HepG2 (cell line): ENCODE measurements at regions of chr7 and their contacts with region 1.

Region 1: GRCh38 chr7:55177589-55178261 is 158.9 kb downstream of the EGFR start:
- DNase-seq: peak; percentile 94
- ATAC-seq: peak; percentile 74
- H3K4me3 ChIP-seq: peak overlapping the region; percentile 42 to 79 (median 49); a peak in 5 of 6 replicates
- H3K27ac ChIP-seq: peak overlapping the region; percentile 99
- H3K4me1 ChIP-seq: peaks cover 69% of the 10 kb centered on the region
- H3K27me3 ChIP-seq: no peaks in the 10 kb centered on the region; a peak in 1 of 5 replicates
- CTCF ChIP-seq: peak; percentile 30
- EP300 ChIP-seq: peak in 1 of 2 experiments; percentile 71; a peak in 2 of 4 replicates
- POLR2A ChIP-seq: peak in 1 of 2 experiments; percentile 64; a peak in 2 of 4 replicates
- RAD21 ChIP-seq: no peak

Region 2: DNA sequence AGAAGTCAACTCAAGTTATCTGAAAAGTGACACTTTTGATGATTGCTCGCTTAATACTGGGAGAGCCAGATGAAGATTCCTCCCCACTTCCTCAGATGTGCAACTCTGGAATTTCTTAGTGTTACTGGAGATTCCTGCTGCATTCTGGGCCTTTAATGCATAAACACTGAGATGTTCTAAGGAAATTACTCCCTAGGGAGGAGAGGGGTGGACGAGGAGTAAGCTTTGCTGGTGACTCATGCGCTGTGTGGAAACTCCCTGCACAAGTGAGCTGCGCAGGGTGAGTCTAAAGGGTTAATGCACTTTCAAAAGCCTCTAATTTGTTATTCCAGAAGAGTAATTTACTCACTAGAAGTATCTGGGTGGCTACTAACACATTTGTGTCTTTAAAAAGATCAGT is 112.6 kb before region 1 on chr7:
- CTCF ChIA-PET with region 1: no interaction called
- POLR2A ChIA-PET with region 1: interaction called, 34 read pairs
- in situ Hi-C with region 1: no loop called
- intact Hi-C with region 1: no loop called
- DNase-seq: no peak
- ATAC-seq: no peak
- H3K4me3 ChIP-seq: no peak overlapping the region
- H3K27ac ChIP-seq: peak overlapping the region; percentile 69
- H3K4me1 ChIP-seq: peaks cover 60% of the 10 kb centered on the region
- H3K27me3 ChIP-seq: no peaks in the 10 kb centered on the region
- CTCF ChIP-seq: no peak
- EP300 ChIP-seq: no peak
- POLR2A ChIP-seq: no peak
- RAD21 ChIP-seq: no peak

Region 3: DNA sequence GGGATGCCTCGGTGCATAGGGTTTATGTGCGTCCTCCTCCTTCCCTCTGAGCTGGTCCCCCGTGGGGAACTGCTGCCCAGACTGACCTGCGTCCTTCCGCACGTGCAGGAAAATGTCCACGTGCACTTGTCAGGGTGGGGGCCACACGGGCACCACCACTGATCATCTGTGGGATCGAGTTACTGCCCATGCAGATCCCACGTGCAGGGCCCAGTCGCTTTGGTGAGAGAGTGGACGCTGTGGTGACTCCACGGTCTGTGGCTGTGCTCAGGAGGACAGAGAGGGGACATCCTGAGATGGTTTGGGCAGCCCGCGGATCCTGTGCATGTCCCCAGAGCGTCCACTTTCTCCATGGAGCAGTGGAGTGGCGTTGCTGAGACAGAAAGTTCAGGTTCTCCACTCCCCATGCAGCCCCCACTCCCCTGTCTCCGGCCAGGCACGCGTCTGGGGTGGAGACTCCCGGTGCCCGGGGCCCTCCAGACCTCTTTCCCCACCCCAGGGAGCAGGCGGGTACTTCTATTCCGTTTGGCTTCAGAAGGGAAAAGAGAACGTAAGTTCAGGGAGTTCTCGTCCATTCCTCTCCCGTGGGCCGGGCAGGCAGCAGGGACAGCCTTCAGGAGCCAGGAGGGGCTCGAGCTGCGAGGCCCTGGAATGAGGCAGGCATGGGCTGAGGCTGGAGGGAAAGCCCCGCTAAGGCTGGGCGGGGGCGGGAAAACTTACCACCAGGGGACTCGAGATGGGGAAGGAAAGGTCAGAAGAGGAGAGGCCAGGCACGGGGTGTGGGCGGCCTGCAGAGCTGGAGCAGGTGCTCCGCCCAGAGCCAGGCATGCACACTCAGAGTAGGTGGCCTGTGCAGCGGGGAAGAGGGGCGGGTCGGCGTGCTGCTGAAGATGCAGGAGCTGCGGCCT is 99.0 kb before region 1 on chr7:
- CTCF ChIA-PET with region 1: no interaction called
- POLR2A ChIA-PET with region 1: interaction called, 20 read pairs
- in situ Hi-C with region 1: no loop called
- intact Hi-C with region 1: loop called (anchors 2 kb)
- DNase-seq: peak; percentile 77
- ATAC-seq: peak; percentile 91
- H3K4me3 ChIP-seq: peak overlapping the region; percentile 53 to 77 (median 56)
- H3K27ac ChIP-seq: peak overlapping the region; percentile 94
- H3K4me1 ChIP-seq: peaks cover 89% of the 10 kb centered on the region
- H3K27me3 ChIP-seq: no peaks in the 10 kb centered on the region
- CTCF ChIP-seq: peak; percentile 74
- EP300 ChIP-seq: peak in 1 of 2 experiments; percentile 47; a peak in 2 of 4 replicates
- POLR2A ChIP-seq: peak; percentile 27 to 48; a peak in 2 of 4 replicates
- RAD21 ChIP-seq: no peak

Region 4: DNA sequence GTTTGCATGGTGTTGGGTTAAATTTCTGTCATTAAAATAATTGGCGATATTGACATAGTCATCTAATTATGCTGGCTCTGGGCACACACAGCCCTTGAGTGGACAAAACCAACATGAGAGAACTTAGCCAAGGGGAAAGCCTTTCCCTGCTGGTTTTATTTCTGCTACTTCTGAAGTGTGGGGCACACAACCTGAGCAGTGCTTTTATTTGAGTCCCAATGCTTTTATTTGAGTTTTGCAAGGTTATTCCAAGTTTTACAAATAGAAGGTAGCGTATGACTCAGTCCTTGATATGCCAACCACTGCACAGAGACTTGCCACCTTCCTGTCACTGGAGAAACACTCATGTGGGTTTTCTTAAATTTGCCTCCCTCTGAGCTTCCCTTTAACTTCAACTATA is 13.2 kb before region 1 on chr7:
- CTCF ChIA-PET with region 1: no interaction called
- POLR2A ChIA-PET with region 1: interaction called, 11 read pairs
- in situ Hi-C with region 1: no loop called
- intact Hi-C with region 1: no loop called
- DNase-seq: no peak
- ATAC-seq: no peak
- H3K4me3 ChIP-seq: no peak overlapping the region
- H3K27ac ChIP-seq: no peak overlapping the region
- H3K4me1 ChIP-seq: no peaks in the 10 kb centered on the region
- H3K27me3 ChIP-seq: no peaks in the 10 kb centered on the region
- CTCF ChIP-seq: no peak
- EP300 ChIP-seq: no peak
- POLR2A ChIP-seq: no peak
- RAD21 ChIP-seq: no peak